Posterior vena cava (tissue), 2 donors: ENCODE measurements at regions of chr9 and their contacts with region 1.

Region 1: DNA sequence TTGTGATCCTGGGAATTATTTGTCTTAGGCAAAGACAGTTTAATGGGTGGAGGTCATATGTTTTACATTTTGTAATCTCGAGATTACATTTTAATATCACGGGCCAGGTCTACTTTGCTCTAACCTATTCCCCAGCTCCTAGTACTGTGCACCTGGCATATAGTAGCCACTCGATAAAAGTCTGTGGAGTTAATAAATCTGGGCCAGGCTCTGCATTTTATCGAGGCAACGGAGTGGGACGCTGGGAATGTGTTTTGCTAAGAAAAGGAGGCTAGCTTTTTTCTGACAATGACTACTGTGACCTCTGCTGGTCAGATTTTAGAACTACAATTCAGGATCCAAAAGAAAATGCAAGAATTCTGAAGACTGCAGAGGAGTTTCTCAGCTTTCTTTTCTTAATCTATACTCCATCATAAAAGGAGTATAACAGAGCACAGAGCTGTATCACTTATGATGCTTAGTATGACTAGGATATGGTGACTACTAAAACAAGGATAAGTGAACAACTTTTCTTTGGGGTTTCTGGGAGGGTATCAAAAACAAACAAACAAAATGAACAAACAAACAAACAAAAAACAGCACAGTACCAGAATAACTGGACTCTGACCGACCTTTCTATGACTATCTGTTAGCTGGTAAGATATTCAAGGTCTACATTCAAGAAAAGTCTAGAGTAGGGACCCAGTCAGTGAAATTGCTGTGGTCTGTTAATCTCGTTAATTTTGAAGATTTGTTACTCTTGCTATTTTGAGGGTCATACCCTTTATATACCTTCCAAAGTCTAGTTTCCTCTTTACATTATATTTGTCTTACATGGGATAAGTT is 46.1 kb upstream of the CER1 start:
- DNase-seq: no peak

Region 2: DNA sequence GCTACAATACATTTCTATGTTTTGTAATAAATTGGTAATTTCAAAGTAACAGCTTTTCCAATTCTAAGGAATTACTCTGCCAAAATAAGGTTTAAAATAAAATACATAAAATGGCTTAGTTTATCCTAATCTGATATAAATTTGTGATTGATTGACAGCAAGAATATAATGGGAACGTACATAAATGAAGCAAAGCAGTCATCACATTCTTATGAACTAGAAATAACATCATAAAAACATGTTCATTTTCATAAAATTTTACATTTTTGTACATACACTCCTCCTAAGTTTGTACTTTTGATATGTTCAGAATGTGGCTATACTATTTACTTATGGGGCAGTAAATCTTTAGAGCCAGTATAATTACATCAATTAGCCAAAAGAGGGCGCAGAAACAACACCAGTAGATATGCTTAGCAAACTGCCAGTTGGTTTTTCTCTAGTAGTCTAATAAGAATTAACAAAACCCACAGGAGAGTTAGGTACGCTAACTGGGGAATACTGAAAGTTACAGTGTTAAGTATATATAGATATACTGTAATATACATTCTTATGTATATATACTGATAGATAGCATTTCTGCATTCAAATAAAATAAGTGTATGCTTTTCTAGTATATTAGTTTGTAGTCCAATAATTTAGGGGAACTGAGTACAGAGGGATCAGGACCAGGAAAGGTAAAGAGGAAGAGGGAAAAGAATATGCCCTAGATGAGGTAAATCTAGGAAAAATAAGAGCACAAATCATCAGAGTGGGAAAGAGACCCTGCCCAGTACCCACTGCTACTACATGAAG is 152.2 kb before region 1 on chr9:
- intact Hi-C with region 1: loop called in 1 of 2 experiments (anchors 5 kb)
- DNase-seq: no peak

Region 3: DNA sequence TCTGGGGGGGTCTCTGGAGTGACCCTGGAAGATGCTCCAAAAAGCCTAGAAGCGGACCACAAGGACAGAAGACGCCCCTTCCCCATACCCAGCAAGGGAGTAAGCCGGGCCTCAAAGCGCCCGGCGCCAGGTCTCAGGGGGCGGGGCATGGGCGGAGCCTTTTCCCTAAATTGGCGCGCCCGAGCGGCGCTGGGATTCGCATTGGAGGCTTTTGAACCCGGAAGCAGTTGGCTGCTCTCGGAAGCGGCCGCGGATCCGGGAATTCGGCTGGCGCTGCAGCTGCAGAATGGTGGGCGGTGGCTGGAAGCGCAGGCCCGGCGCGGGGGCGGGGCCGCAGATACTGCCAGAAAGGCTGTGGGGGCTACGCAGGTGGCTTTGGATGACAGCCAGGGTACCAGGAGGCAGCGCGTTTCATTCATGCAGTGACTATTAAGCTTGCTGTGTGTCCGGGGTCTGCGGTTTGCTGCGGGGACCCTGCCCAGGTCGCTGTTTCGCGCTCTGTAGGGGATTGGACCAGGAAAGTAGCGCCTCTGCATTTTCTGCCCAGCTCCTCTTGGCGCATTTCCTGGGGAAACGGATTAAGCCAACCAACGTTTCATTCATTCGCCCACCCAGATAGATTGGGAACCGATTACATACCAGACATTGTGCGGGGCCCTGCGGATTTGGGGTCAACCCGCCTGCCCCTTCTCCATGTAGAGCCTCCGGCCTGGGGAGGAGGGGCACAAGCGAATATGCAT is 224.6 kb after region 1 on chr9:
- intact Hi-C with region 1: no loop called
- DNase-seq: peak; percentile 95